ENCODE measurements at regions of chr18 and their contacts with region 1.

Region 1: GRCh38 chr18:13720123-13720522 is 6.2 kb downstream of the FAM210A start:
- DNase-seq: no peak
- ATAC-seq: no peak
- H3K4me3 ChIP-seq: no peak overlapping the region
- H3K27ac ChIP-seq: no peak overlapping the region
- H3K4me1 ChIP-seq: peaks cover 0 to 33% (median 15%) of the 10 kb centered on the region in 9 donors
- H3K27me3 ChIP-seq: no peaks in the 10 kb centered on the region
- CTCF ChIP-seq: no peak

Region 2: GRCh38 chr18:13549880-13550232 is 170.3 kb before region 1 on chr18:
- intact Hi-C with region 1: loop called in 5 of 10 experiments (anchors 5 to 10 kb)
- DNase-seq: no peak
- ATAC-seq: no peak
- H3K4me3 ChIP-seq: no peak overlapping the region
- H3K27ac ChIP-seq: peak overlapping the region in 8 of 10 donors; percentile 7 to 57 (median 51)
- H3K4me1 ChIP-seq: peaks cover 0 to 52% (median 29%) of the 10 kb centered on the region in 9 donors
- H3K27me3 ChIP-seq: no peaks in the 10 kb centered on the region
- CTCF ChIP-seq: no peak

Region 3: GRCh38 chr18:13680612-13681011 is 39.5 kb before region 1 on chr18:
- intact Hi-C with region 1: loop called in 2 of 10 experiments (anchors 5 kb)
- DNase-seq: peak in 1 of 2 donors; percentile 36
- ATAC-seq: peak in 6 of 8 donors; percentile 59 to 75 (median 64)
- H3K4me3 ChIP-seq: no peak overlapping the region
- H3K27ac ChIP-seq: peak overlapping the region in 5 of 10 donors; percentile 84 to 90 (median 85)
- H3K4me1 ChIP-seq: peaks cover 3 to 58% (median 27%) of the 10 kb centered on the region in 9 donors
- H3K27me3 ChIP-seq: no peaks in the 10 kb centered on the region
- CTCF ChIP-seq: peak; percentile 17 to 64 (median 48)

Region 4: DNA sequence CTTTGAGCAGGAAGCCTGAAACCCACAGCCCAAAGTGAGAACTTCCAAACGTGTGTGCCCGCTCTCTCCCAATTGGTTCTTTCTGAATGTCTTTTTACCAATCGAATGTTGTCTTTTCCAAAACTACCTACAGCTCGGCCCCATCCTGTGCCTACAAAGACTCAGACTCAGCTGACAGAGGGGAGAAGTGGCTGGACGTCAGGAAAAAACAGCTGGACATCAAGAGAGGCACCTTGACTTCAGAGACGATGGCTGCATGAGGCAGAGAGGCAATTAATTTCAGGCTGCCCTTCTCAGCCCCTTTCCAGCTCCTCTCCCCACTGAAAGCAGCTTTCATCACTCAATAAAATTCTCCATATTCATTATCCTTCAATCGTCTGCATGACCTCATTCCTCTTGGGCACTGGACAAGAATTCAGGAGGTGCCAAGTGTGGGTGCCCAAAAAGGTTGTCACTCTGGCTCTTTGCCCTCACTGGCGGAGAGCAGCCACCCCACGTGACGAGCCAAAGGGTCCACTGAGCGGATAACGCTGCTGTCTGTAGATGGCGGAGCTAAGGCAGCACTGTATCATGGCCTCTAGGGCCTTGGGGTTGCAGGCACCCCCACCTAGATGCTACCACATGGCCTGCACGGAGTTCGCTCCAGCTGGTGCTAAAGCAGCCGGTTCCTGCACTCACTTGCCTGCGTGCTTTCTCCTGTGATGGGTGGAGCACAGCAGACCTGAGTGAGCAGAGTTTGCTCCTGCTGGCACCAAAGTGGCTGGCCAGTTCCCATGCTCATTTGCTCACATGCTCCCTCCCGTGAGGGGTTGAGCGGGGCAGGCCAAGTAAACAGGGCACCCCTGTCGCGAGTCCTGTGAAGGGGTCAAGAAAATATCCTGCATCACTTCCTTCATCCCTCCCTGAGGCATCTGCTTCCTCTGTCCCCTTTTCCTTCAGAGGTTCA is 31.7 kb before region 1 on chr18:
- intact Hi-C with region 1: loop called in 2 of 10 experiments (anchors 5 kb)
- DNase-seq: peak; percentile 39 to 59
- ATAC-seq: peak; percentile 69 to 95 (median 93)
- H3K4me3 ChIP-seq: peak overlapping the region in 2 of 10 donors; percentile 9 to 16
- H3K27ac ChIP-seq: peak overlapping the region in 7 of 10 donors; percentile 49 to 74 (median 63)
- H3K4me1 ChIP-seq: peaks cover 0 to 49% (median 12%) of the 10 kb centered on the region in 9 donors
- H3K27me3 ChIP-seq: no peaks in the 10 kb centered on the region
- CTCF ChIP-seq: peak in 1 of 9 donors; percentile 6

Region 5: DNA sequence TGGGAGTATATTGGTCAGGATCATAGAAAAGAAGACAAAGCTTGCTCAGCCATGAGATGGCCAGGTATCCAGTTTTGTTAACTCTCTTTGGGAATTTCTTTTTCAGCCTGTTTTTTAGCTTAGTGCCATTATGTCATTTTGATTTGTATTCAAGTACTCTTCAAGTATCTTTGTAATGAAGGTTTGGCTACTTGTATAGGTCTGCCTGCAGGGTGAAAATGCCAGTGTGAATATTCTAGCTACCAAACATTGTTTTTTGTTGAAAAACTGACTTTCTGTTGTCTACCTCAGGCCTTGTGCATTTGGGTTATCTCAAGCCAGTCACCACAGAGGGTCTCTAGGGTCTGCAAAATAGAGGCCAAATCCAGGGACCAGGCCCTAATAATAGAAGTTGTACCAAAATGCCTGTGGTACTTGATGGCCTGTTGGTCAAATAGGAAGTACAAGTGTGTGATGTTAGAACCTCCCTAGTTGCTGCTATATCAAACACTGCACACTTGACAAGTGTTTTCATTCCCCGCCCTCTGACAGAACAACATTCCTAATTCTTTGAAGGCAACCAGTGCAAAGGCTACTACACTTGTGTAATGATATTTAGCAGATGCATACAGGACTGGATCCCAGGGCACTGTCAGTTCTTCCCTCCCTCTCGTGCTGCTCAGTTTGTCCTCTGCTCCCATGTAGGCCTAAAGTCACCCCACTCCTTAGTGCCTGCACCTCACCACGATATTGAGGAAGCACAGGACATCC is 42.7 kb after region 1 on chr18:
- intact Hi-C with region 1: no loop called
- DNase-seq: peak in 1 of 2 donors; percentile 9
- ATAC-seq: peak; percentile 48 to 94 (median 84)
- H3K4me3 ChIP-seq: no peak overlapping the region
- H3K27ac ChIP-seq: peak overlapping the region in 7 of 10 donors; percentile 25 to 73 (median 56)
- H3K4me1 ChIP-seq: peaks cover 0 to 32% (median 0%) of the 10 kb centered on the region in 9 donors
- H3K27me3 ChIP-seq: no peaks in the 10 kb centered on the region
- CTCF ChIP-seq: no peak

Measured in heart right ventricle (tissue), 16 donors.